MCF 10A (cell line): ENCODE measurements at regions of chrX and their contacts with region 1.

Region 1: DNA sequence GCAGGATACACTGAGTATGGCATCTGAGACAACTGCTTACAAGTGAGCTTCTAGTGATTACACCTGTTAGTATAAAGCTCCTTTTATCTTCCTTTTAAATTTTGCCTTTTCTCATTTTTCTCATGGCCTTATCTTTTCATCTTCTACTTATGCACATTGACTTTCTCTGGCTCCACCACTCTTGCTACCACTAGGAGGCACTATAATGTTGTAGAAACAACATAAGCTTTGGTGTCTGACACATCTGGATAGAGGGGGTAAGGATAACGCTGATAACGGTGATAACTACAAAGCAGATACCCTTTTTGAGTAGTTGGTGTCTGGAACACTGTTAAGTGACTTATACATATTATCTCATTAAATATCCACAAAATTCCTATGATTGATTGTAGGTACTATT is 187.4 kb upstream of the TEX13C start:
- DNase-seq: peak; percentile 28
- H3K4me3 Mint-ChIP-seq: no peak overlapping the region
- H3K27ac Mint-ChIP-seq: no peak overlapping the region
- H3K4me1 Mint-ChIP-seq: no peaks in the 10 kb centered on the region
- H3K27me3 Mint-ChIP-seq: no peaks in the 10 kb centered on the region
- CTCF ChIP-seq: peak; percentile 53

Region 2: DNA sequence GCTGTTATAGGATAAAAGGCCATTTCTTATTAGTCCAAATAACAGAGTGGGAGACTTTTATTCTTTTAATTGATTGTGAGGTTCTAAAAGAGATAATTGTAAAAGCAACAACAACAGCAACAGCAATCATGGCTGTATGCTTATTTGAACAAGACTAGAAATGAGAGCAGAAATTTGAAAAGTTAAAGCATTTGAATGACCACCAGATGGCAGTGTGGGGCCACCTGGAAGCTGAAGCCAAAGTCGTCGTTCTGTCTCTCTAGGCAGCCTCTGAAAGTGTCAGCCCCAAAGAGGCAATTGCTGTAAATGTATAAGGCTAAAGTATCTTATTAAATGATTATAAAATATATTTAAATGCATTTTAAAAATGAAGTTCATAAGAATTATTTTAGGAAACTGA is 743.7 kb before region 1 on chrX:
- CTCF ChIA-PET with region 1: interaction called, 16 read pairs
- POLR2A ChIA-PET with region 1: no interaction called
- intact Hi-C with region 1: loop called (anchors 1 kb)
- DNase-seq: peak; percentile 61
- H3K4me3 Mint-ChIP-seq: no peak overlapping the region
- H3K27ac Mint-ChIP-seq: no peak overlapping the region
- H3K4me1 Mint-ChIP-seq: no peaks in the 10 kb centered on the region
- H3K27me3 Mint-ChIP-seq: peaks cover 14% of the 10 kb centered on the region
- CTCF ChIP-seq: peak; percentile 74

Region 3: GRCh38 chrX:124406294-124407014 is 725.8 kb before region 1 on chrX:
- CTCF ChIA-PET with region 1: interaction called, 79 read pairs
- POLR2A ChIA-PET with region 1: interaction called, 15 read pairs
- intact Hi-C with region 1: loop called (anchors 1 kb)
- DNase-seq: peak; percentile 87
- H3K4me3 Mint-ChIP-seq: no peak overlapping the region
- H3K27ac Mint-ChIP-seq: no peak overlapping the region
- H3K4me1 Mint-ChIP-seq: no peaks in the 10 kb centered on the region
- H3K27me3 Mint-ChIP-seq: no peaks in the 10 kb centered on the region
- CTCF ChIP-seq: peak; percentile 63

Region 4: DNA sequence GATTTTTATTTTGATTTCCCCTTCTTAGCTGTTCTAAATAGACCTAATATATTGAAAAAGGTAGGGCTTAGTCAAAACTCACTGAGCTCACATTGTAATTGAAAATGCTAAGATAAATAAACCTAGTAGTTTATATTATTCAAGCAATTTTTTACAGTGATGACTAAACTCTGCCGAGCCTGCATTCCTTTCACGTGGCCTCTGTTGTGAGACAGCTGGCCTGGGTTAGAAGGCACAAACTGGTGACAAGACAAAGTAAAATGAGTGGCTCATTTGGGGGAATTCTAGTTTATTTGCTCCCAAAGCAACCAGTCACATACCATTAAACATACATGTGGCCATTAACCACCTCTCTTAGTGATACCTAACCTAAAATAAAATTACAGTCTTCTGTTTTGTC is 17.9 kb after region 1 on chrX:
- CTCF ChIA-PET with region 1: interaction called, 25 read pairs
- POLR2A ChIA-PET with region 1: no interaction called
- intact Hi-C with region 1: no loop called
- DNase-seq: peak; percentile 10
- H3K4me3 Mint-ChIP-seq: no peak overlapping the region
- H3K27ac Mint-ChIP-seq: no peak overlapping the region
- H3K4me1 Mint-ChIP-seq: no peaks in the 10 kb centered on the region
- H3K27me3 Mint-ChIP-seq: no peaks in the 10 kb centered on the region
- CTCF ChIP-seq: no peak

Region 5: GRCh38 chrX:125436855-125437254 is 304.6 kb after region 1 on chrX:
- CTCF ChIA-PET with region 1: interaction called, 3 read pairs
- POLR2A ChIA-PET with region 1: no interaction called
- intact Hi-C with region 1: loop called (anchors 1 kb)
- DNase-seq: peak; percentile 49
- H3K4me3 Mint-ChIP-seq: no peak overlapping the region
- H3K27ac Mint-ChIP-seq: no peak overlapping the region
- H3K4me1 Mint-ChIP-seq: no peaks in the 10 kb centered on the region
- H3K27me3 Mint-ChIP-seq: no peaks in the 10 kb centered on the region
- CTCF ChIP-seq: peak; percentile 42

Region 6: GRCh38 chrX:126342859-126343258 is 1210.6 kb after region 1 on chrX:
- CTCF ChIA-PET with region 1: no interaction called
- POLR2A ChIA-PET with region 1: no interaction called
- intact Hi-C with region 1: no loop called
- DNase-seq: no peak
- H3K4me3 Mint-ChIP-seq: no peak overlapping the region
- H3K27ac Mint-ChIP-seq: no peak overlapping the region
- H3K4me1 Mint-ChIP-seq: peaks cover 11% of the 10 kb centered on the region
- H3K27me3 Mint-ChIP-seq: no peaks in the 10 kb centered on the region
- CTCF ChIP-seq: no peak

Region 7: DNA sequence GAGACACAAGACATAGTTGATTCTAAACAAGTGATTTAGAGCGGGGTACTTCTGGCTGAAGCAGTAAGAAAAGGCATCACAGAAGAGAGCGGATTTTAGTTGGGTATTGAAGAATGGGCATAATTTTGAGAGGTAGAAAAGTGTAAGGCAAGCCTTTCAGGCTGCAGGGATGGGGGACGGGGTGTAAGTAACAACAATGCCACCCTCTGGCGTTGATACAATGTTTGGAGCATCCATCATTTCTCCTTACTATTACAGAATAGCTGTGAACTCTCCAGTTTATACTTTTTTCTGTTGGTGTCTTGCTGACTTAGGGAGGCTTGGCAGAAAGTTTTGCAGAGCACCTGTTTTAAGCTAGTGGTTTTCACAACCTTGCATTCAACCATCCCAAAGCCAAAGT is 1608.8 kb after region 1 on chrX:
- CTCF ChIA-PET with region 1: no interaction called
- POLR2A ChIA-PET with region 1: no interaction called
- intact Hi-C with region 1: loop called (anchors 5 kb)
- DNase-seq: peak; percentile 27
- H3K4me3 Mint-ChIP-seq: no peak overlapping the region
- H3K27ac Mint-ChIP-seq: no peak overlapping the region
- H3K4me1 Mint-ChIP-seq: no peaks in the 10 kb centered on the region
- H3K27me3 Mint-ChIP-seq: no peaks in the 10 kb centered on the region
- CTCF ChIP-seq: peak; percentile 31